PC-3 (cell line): ENCODE measurements at regions of chr6 and their contacts with region 1.

Region 1: DNA sequence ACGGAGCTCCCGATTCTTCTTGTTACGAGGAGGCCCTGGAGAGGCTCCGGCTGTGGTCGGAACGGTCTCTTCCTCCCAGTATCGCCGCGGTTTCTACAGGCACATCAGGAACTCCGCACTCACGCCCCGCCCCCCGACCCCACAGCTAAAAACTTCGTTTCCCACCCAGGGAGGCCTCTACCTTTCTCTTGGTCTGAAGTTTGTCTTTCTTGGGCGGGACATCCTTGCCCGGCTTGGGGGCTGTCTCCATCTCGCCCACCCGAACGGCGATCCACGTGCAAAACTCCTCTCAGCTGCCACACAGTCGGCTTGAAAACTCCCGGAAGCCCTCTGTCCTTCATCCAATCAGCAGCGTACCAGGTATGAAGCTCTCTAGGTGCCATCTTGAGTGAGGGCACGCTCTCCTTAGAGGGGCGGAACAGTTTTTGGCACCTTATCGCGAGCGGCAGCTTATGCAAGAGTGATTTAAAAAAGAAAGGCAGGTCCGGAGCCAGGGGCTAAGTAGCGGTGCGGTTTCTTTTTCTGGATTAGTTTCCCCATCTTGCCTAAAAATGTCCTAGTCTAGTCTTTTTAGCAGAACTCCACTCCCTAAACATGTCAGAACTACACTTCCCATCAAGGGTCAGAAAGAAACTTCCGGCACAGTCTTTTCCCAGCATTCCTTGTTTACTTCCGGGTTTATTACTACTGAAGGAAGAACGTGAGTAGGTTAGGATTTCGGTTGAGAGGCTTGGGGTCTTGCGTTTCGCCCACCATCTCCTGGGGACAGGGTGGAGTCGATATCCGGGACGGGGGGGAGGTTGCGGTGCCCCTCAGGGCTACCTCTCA is at the starts of genes PFDN6 and WDR46:
- DNase-seq: peak; percentile 88
- ATAC-seq: peak; percentile 95
- H3K4me3 ChIP-seq: peak within 1 kb of the TSS; percentile 97
- H3K27ac ChIP-seq: peak within 1 kb of the TSS; percentile 6
- H3K4me1 ChIP-seq: peaks cover 17% of the 10 kb centered on the region
- H3K27me3 ChIP-seq: no peaks in the 10 kb centered on the region
- CTCF ChIP-seq: no peak
- total RNA-seq, gene PFDN6: 153 and 181 TPM in 2 replicates
- total RNA-seq, gene WDR46: 104 and 146 TPM in 2 replicates

Region 2: GRCh38 chr6:33200219-33201146 is 88.7 kb before region 1 on chr6 and contains the starts of genes RXRB and SLC39A7:
- CTCF ChIA-PET with region 1: no interaction called
- POLR2A ChIA-PET with region 1: no interaction called
- intact Hi-C with region 1: no loop called
- DNase-seq: peak; percentile 99
- ATAC-seq: peak; percentile 56
- H3K4me3 ChIP-seq: peak within 1 kb of the TSS; percentile 97
- H3K27ac ChIP-seq: peak within 1 kb of the TSS; percentile 92
- H3K4me1 ChIP-seq: peaks cover 32% of the 10 kb centered on the region
- H3K27me3 ChIP-seq: no peaks in the 10 kb centered on the region
- CTCF ChIP-seq: no peak
- total RNA-seq, gene RXRB: 24.0 and 30.9 TPM in 2 replicates
- total RNA-seq, gene SLC39A7: 128 and 149 TPM in 2 replicates

Region 3: DNA sequence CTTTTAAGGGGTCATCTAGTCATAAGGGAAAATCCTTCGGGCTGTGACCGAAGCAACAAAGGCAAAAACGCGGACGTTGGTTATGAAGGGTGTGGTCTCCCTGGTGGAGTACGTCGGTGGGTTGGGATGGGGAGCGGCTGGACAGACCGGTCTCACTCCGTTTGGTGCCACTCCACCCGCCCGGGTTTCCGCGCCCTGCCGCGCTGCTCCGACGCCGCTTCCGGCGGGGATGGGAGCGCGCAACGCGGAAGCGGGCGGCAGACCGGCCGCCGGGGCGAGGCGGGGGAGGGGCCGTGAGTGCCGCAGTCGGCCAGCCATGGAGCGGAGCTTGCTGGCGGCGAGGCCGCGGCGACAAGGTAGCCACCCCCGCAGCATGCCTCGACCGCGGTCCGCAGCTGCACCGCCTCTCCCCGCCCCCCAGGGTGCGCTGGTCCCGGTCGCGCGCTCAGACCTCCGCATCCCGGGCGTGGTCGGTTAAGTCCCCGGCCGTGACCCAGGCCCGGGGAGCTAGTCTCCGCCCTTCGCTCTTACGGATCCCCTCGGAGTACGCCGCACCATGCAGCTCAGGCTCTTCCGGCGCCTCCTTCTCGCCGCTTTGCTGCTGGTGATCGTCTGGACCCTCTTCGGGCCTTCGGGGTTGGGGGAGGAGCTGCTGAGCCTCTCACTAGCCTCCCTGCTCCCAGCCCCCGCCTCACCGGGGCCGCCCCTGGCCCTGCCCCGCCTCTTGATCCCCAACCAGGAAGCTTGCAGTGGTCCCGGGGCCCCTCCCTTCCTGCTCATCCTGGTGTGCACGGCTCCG is 12.1 kb before region 1 on chr6 and contains the start of gene B3GALT4:
- CTCF ChIA-PET with region 1: no interaction called
- POLR2A ChIA-PET with region 1: interaction called, 12 read pairs
- intact Hi-C with region 1: no loop called
- DNase-seq: peak; percentile 92
- ATAC-seq: peak; percentile 70
- H3K4me3 ChIP-seq: peak within 1 kb of the TSS; percentile 87
- H3K27ac ChIP-seq: peak within 1 kb of the TSS; percentile 77
- H3K4me1 ChIP-seq: peaks cover 42% of the 10 kb centered on the region
- H3K27me3 ChIP-seq: no peaks in the 10 kb centered on the region
- CTCF ChIP-seq: no peak
- total RNA-seq, gene B3GALT4: 7.9 and 8.4 TPM in 2 replicates